ENCODE measurements at regions of chr5 and their contacts with region 1.

Region 1: DNA sequence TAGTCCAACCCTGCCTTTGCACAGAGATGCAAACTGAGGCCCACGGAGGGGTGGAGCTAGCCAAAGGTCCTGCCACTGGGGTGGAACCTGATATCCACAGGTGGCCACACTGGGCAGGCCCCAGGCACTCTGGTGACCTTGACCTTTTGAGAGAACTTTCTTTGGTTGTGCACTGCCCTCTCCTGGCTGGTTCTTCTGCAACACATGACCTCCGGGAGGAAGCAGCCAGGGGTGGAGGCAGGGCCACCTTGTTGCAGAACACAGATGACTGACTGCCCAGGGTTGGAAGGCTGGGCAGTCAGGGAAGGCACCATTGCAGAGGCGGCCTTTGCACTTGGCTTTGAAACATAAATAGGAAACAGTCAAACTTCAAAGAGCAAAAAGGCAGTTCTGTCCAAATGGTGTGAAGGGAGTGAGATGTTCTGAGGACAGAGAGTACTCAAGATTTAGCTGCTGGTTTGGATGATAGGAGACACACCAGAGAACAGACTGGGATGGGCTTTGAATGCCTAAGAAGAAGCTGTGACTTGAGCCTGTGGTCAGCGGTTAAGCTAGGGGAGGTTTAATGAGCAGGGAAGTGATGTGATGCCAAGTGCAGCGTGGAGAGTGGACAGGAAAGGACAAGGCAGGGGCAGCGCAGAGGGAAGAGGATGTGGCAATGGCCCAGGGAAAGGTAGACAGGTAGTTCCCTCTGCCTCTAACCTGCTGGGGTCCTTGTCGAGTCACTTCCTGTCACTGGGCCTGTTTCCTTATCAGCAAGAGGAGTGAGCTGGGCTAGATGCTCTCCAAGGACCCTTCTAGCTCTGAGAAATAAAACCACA is 6.8 kb upstream of the TCOF1 start:
- DNase-seq: peak; percentile 33 to 52 (median 33)
- H3K4me3 ChIP-seq: no peak overlapping the region
- H3K4me3 Mint-ChIP-seq: peak overlapping the region in 2 of 8 donors; percentile 23 to 41
- H3K27ac ChIP-seq: no peak overlapping the region
- H3K27ac Mint-ChIP-seq: peak overlapping the region; percentile 45 to 93 (median 78)
- H3K4me1 ChIP-seq: peaks cover 13% of the 10 kb centered on the region
- H3K4me1 Mint-ChIP-seq: peaks cover 6 to 14% (median 8%) of the 10 kb centered on the region in 4 donors
- H3K27me3 ChIP-seq: no peaks in the 10 kb centered on the region
- H3K27me3 Mint-ChIP-seq: peaks cover 0 to 1% of the 10 kb centered on the region in 2 donors

Region 2: GRCh38 chr5:149128023-149128875 is 1222.5 kb before region 1 on chr5:
- CTCF ChIA-PET with region 1: no interaction called
- POLR2A ChIA-PET with region 1: no interaction called
- intact Hi-C with region 1: no loop called
- DNase-seq: no peak
- H3K4me3 ChIP-seq: no peak overlapping the region
- H3K4me3 Mint-ChIP-seq: no peak overlapping the region
- H3K27ac ChIP-seq: no peak overlapping the region
- H3K27ac Mint-ChIP-seq: no peak overlapping the region
- H3K4me1 ChIP-seq: no peaks in the 10 kb centered on the region
- H3K4me1 Mint-ChIP-seq: no peaks in the 10 kb centered on the region
- H3K27me3 ChIP-seq: no peaks in the 10 kb centered on the region
- H3K27me3 Mint-ChIP-seq: peaks cover 16 to 26% of the 10 kb centered on the region in 2 donors

Region 3: GRCh38 chr5:150161242-150162141 is 189.2 kb before region 1 on chr5:
- CTCF ChIA-PET with region 1: interaction called, 16 read pairs
- POLR2A ChIA-PET with region 1: no interaction called
- intact Hi-C with region 1: no loop called
- DNase-seq: peak; percentile 51 to 64 (median 54)
- H3K4me3 ChIP-seq: no peak overlapping the region
- H3K4me3 Mint-ChIP-seq: no peak overlapping the region
- H3K27ac ChIP-seq: no peak overlapping the region
- H3K27ac Mint-ChIP-seq: no peak overlapping the region
- H3K4me1 ChIP-seq: no peaks in the 10 kb centered on the region
- H3K4me1 Mint-ChIP-seq: peaks cover 0 to 2% (median 1%) of the 10 kb centered on the region in 4 donors
- H3K27me3 ChIP-seq: no peaks in the 10 kb centered on the region
- H3K27me3 Mint-ChIP-seq: peaks cover 19 to 21% of the 10 kb centered on the region in 2 donors

Region 4: DNA sequence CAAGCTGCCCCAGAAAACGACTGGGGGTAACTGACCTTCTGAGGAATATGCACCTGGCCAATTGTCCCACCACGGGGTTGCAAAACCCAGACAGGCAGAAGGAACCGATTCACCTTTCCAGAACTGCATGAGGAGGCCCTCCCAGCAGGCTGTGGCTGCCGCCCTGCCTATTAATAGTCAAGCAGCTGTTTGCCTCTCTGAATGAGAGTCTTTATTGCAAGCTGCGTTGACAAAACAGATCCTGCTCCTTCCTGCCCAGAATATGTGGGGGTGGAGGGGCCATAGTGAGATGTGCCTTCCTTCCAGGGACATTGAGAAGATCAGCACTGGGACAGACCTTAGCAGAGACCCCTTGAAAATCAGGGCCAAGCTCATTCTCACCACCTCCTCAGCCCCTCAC is 11.6 kb before region 1 on chr5:
- CTCF ChIA-PET with region 1: interaction called, 12 read pairs
- POLR2A ChIA-PET with region 1: no interaction called
- intact Hi-C with region 1: no loop called
- DNase-seq: no peak
- H3K4me3 ChIP-seq: no peak overlapping the region
- H3K4me3 Mint-ChIP-seq: no peak overlapping the region
- H3K27ac ChIP-seq: no peak overlapping the region
- H3K27ac Mint-ChIP-seq: no peak overlapping the region
- H3K4me1 ChIP-seq: no peaks in the 10 kb centered on the region
- H3K4me1 Mint-ChIP-seq: peaks cover 0 to 6% (median 2%) of the 10 kb centered on the region in 4 donors
- H3K27me3 ChIP-seq: no peaks in the 10 kb centered on the region
- H3K27me3 Mint-ChIP-seq: no peaks in the 10 kb centered on the region